GM18951 (cell line): ENCODE measurements at regions of chr6 and their contacts with region 1.

Region 1: GRCh38 chr6:3045369-3045768 is 22.9 kb upstream of the RIPK1 start:
- POLR2A ChIP-seq: no peak

Region 2: DNA sequence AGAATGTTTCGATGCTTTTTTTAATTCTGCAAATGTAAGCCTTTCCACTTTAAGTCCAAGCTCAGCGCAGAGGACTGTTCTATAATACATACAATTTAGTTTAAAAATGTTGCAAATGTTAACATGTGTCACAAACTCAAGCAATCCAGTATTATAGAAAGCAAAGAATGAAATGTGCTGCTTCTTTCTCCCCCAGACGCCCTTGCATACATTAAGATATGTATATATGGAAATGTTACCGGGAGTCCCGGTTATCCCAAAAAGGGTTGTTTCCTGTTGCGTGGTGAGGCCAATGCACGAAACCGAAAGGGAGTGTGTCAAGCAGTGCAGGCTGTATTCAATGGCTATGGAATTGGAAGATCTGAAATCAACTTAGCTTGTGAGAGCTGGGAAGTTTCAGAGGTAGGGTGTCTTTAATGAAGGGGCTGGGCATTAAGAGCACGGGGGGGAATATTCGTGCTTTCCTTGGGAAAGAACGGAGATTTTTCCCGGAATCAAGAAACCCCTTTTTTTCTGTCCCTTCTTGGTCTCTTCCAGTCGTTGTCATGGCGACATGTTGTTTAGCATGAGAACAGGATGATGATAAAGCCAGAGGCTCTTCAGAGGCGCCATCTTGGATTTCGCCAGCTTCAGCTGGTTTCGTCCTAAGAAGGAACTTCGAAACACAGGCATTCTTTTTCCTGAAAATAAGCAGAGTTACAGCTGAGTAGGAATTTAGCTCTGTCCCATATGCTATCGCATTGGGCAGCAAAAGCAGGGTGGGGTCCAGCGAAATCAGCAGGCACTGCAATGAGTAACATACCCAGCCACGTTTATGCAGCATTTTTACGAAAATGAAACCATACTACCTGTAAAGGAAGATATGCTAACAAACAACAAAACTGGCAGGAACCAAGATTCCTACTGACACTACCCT is 55.8 kb before region 1 on chr6:
- in situ Hi-C with region 1: loop called (anchors 5 kb)
- POLR2A ChIP-seq: peak; percentile 50

Region 3: GRCh38 chr6:3962957-3963303 is 917.6 kb after region 1 on chr6:
- in situ Hi-C with region 1: no loop called
- POLR2A ChIP-seq: no peak